ENCODE measurements at regions of chr7 and their contacts with region 1.

Region 1: DNA sequence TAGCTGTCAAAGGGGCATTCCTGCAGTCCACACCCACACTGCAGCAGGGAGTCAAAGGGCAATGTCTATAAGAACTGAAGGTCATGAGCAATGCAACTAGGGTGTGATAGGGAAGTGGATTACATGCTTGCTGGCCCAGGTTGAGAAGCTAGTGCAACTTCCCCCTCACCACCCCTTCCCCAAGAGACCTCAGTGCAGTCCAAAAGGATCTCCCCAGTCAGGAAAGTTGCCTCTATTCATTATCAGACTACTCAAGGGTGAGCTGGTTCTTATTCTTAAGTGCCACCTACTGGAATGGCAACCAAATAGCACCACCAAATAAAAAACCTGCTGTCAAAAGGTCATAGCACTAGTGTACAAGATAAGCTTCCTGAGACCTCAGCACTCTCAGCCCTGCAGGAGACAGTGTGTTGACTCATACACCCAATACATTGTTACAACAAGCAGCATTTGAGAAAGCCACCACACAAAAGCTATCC is 28.2 kb downstream of the MTERF1 start:
- DNase-seq: no peak
- H3K4me3 ChIP-seq: no peak overlapping the region
- H3K27me3 ChIP-seq: no peaks in the 10 kb centered on the region
- CTCF ChIP-seq: 0 out of 2 replicates have a peak, but pooled peaks have one; percentile 12

Region 2: GRCh38 chr7:91826377-91826776 is 25.9 kb before region 1 on chr7:
- CTCF ChIA-PET with region 1: interaction called, 10 read pairs
- POLR2A ChIA-PET with region 1: no interaction called
- DNase-seq: no peak
- H3K4me3 ChIP-seq: no peak overlapping the region
- H3K27me3 ChIP-seq: no peaks in the 10 kb centered on the region
- CTCF ChIP-seq: no peak

Measured in BJ (cell line).